ENCODE measurements at regions of chr1 and their contacts with region 1.

Region 1: DNA sequence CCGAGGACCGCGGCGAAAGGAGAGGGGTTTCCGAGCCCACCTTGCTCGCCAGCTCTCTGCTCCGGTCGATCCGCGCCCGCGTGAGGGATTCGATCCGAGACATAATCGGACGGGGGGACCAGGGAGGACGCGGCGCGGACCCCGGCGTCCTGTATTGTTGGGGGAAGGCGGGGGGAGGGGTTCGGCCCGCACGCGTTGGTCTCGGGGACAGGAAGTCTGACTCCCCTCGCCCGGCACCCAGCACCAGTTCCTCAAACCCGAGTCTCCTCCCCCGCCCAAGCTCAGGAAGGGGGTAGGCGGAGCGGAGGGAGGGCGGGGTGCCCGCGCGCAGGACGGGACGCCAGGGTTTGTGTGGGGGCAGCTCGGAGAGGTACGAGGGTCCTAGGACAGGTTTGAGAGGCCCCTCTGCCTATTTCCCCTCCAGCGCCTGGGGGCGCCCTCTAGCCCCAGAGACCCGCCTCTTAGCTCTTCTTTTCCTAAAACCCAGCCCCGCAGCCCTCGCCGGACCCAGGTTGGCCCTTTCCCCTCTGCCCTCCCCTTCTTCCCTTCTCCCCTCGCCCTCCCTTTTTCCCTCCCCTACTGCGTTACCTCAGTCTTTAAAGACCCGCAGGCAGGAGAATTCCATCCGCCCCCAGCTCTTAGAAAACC is at the start of gene ARHGEF2:
- DNase-seq: peak; percentile 89
- H3K4me3 Mint-ChIP-seq: peak within 1 kb of the TSS; percentile 100
- H3K27ac Mint-ChIP-seq: peak within 1 kb of the TSS; percentile 89
- H3K4me1 Mint-ChIP-seq: peaks cover 69% of the 10 kb centered on the region
- H3K27me3 Mint-ChIP-seq: no peaks in the 10 kb centered on the region

Region 2: GRCh38 chr1:155934097-155934935 is 44.1 kb before region 1 on chr1 and contains the start of gene KHDC4:
- CTCF ChIA-PET with region 1: interaction called, 98 read pairs
- DNase-seq: peak; percentile 97
- H3K4me3 Mint-ChIP-seq: no peak within 1 kb of the TSS
- H3K27ac Mint-ChIP-seq: peak within 1 kb of the TSS; percentile 68
- H3K4me1 Mint-ChIP-seq: peaks cover 50% of the 10 kb centered on the region
- H3K27me3 Mint-ChIP-seq: no peaks in the 10 kb centered on the region

Region 3: GRCh38 chr1:155946633-155947219 is 31.7 kb before region 1 on chr1:
- CTCF ChIA-PET with region 1: interaction called, 11 read pairs
- DNase-seq: no peak
- H3K4me3 Mint-ChIP-seq: no peak overlapping the region
- H3K27ac Mint-ChIP-seq: peak overlapping the region; percentile 88
- H3K4me1 Mint-ChIP-seq: peaks cover 55% of the 10 kb centered on the region
- H3K27me3 Mint-ChIP-seq: no peaks in the 10 kb centered on the region

Region 4: DNA sequence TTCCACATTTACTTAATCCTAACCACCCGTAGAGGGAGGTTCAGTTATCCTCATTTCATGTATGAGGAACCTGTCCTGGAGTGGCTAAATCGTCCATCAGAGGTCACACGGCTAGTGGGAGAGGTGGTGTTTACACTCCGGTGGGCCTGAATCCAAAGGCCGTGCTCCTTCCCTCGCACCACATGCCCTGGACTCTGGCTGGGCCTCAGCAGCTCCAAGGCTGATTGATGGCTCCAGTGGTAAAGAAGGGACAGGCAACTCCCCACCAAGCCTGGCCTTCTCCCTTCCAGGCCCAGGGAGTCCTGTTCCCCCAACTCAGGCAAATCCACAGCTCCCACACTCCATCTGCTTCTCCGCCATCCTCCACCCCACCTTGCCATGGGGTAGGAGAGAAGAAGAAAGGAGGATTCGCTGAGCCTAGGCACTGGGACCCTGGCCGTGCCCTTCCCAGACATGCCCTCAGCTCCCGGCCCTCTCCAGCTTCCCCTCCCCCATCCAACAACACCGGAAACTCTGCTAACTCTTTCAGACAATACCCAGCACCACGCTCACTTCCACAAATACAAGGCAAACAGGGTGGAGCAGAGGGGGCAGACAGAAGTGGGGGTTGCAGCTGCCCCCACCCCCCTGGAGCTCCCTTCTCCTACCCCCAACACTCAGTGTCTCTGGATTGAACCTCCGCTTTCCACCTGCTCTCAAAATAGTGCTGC is 11.0 kb before region 1 on chr1:
- CTCF ChIA-PET with region 1: interaction called, 17 read pairs
- DNase-seq: peak; percentile 60
- H3K4me3 Mint-ChIP-seq: peak overlapping the region; percentile 63
- H3K27ac Mint-ChIP-seq: peak overlapping the region; percentile 89
- H3K4me1 Mint-ChIP-seq: peaks cover 77% of the 10 kb centered on the region
- H3K27me3 Mint-ChIP-seq: no peaks in the 10 kb centered on the region

Region 5: DNA sequence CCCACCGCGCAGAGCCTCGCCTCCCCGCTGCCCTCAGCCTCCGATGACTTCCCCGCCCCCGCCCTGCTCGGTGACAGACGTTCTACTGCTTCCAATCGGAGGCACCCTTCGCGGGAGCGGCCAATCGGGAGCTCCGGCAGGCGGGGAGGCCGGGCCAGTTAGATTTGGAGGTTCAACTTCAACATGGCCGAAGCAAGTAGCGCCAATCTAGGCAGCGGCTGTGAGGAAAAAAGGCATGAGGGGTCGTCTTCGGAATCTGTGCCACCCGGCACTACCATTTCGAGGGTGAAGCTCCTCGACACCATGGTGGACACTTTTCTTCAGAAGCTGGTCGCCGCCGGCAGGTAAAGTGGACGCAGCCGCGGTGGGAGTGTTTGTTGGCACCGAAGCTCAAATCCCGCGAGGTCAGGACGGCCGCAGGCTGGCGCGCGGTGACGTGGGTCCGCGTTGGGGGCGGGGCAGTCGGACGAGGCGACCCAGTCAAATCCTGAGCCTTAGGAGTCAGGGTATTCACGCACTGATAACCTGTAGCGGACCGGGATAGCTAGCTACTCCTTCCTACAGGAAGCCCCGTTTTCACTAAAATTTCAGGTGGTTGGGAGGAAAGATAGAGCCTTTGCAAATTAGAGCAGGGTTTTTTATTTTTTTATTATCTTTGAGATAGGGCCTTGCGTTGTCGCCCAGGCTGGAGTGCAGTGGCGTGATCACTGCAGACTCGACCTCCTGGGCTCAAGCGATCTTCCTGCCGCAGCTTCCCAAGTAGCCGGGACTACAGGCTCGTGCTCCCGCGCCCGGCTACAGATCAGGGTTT is 234.6 kb after region 1 on chr1 and contains the start of gene PMF1:
- CTCF ChIA-PET with region 1: no interaction called
- DNase-seq: peak; percentile 99
- H3K4me3 Mint-ChIP-seq: peak within 1 kb of the TSS; percentile 86
- H3K27ac Mint-ChIP-seq: peak within 1 kb of the TSS; percentile 99
- H3K4me1 Mint-ChIP-seq: peaks cover 54% of the 10 kb centered on the region
- H3K27me3 Mint-ChIP-seq: no peaks in the 10 kb centered on the region

Measured in activated naive CD4-positive, alpha-beta T cell treated with anti-CD3 and anti-CD28 coated beads, Interleukin-2, amount 10 ng/mL, durations not matched to agents 7 days and 5 days (primary cell).